Activated CD4-positive, alpha-beta T cell treated with anti-CD3 and anti-CD28 coated beads for 36 hours (primary cell): ENCODE measurements at regions of chr6 and their contacts with region 1.

Region 1: GRCh38 chr6:16731478-16732051 is 29.7 kb downstream of the ATXN1 start:
- DNase-seq: peak; percentile 57
- ATAC-seq: peak; percentile 67
- H3K4me3 Mint-ChIP-seq: peak overlapping the region; percentile 26
- H3K27ac Mint-ChIP-seq: peak overlapping the region; percentile 65
- H3K4me1 Mint-ChIP-seq: peaks cover 57% of the 10 kb centered on the region
- H3K27me3 Mint-ChIP-seq: no peaks in the 10 kb centered on the region

Region 2: GRCh38 chr6:16432075-16433032 is 299.2 kb before region 1 on chr6:
- CTCF ChIA-PET with region 1: no interaction called
- POLR2A ChIA-PET with region 1: no interaction called
- intact Hi-C with region 1: no loop called
- DNase-seq: peak; percentile 37
- ATAC-seq: peak; percentile 46
- H3K4me3 Mint-ChIP-seq: no peak overlapping the region
- H3K27ac Mint-ChIP-seq: peak overlapping the region; percentile 38
- H3K4me1 Mint-ChIP-seq: peaks cover 58% of the 10 kb centered on the region
- H3K27me3 Mint-ChIP-seq: no peaks in the 10 kb centered on the region

Region 3: DNA sequence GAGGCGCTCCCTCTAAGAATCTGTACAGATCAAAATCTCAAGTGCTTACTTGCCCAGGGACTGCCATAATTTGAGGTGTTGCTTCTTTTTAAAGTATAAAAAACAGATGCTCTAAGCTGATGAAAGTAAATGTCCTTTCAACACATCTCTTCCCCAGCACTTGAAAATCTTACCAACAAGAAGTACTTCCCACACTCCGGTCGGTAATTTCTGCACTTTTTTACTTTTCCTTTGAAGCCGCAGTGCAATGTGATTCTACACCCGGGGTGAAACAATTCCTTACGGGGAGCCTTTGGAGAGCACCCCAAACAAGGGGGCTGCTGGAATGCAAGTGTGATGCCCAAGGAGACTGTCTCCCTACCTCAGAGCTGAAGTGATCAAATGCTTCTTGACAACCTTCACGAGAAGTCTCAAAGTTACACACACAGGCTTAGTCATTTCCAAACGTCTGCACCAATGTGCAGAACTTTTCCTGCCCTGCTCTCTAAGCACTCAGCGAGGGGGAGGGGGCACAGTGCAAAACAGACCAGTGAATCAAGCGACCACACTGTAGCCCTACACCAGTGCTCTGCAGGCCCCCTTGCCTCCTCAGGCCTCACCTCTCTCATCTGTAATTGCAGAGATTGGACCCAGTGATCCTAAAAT is 27.0 kb before region 1 on chr6:
- CTCF ChIA-PET with region 1: no interaction called
- POLR2A ChIA-PET with region 1: interaction called, 10 read pairs
- intact Hi-C with region 1: no loop called
- DNase-seq: peak; percentile 86
- ATAC-seq: peak; percentile 88
- H3K4me3 Mint-ChIP-seq: peak overlapping the region; percentile 74
- H3K27ac Mint-ChIP-seq: peak overlapping the region; percentile 83
- H3K4me1 Mint-ChIP-seq: peaks cover 69% of the 10 kb centered on the region
- H3K27me3 Mint-ChIP-seq: no peaks in the 10 kb centered on the region